ENCODE measurements at regions of chr1 and their contacts with region 1.

Region 1: DNA sequence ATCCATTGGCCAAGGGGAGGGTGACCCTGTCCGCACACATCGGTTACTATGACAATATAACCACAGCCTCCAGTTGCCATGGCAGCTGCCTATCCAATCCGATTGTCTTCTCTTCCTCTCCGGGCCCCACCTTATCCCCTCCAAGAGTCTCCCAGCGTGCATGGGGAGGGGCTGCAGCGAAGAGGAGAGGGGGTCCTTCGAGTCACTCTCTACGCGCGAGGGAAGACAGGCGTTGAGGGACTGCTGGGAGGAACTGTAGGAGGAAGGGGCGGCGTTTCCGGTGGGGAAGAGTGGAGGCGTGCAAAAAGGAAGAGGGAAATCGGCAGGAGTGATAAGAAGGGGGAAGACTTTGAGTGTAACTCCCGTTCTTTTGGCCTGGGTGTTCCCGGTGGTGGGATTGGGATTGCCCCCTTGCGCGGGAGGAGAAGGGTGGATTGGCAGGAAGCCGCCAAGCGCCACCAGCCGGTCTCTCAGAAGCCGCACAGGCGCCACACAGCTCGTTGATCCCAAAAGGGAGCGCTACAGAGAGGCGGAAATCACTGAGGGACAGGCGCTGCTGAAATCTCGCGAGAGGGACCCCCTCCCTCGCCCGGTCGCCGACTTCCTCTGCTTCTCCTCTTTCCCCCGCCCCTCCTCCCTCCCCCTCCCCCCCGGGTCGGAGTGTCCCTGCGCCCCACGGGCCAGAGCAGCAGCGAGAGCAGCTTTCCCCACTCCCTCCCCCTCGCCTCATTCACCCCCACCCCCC is 384 bp upstream of the SMG7 start:
- DNase-seq: peak; percentile 94 to 99 (median 97)
- ATAC-seq: peak; percentile 66
- H3K4me3 ChIP-seq: peak overlapping the region; percentile 78
- H3K4me3 Mint-ChIP-seq: peak overlapping the region; percentile 96
- H3K27ac ChIP-seq: peak overlapping the region; percentile 86 to 96
- H3K27ac Mint-ChIP-seq: peak overlapping the region; percentile 97
- H3K4me1 ChIP-seq: peaks cover 22% of the 10 kb centered on the region
- H3K4me1 Mint-ChIP-seq: peaks cover 37% of the 10 kb centered on the region
- H3K27me3 ChIP-seq: no peaks in the 10 kb centered on the region
- H3K27me3 Mint-ChIP-seq: no peaks in the 10 kb centered on the region
- CTCF ChIP-seq: no peak

Region 2: DNA sequence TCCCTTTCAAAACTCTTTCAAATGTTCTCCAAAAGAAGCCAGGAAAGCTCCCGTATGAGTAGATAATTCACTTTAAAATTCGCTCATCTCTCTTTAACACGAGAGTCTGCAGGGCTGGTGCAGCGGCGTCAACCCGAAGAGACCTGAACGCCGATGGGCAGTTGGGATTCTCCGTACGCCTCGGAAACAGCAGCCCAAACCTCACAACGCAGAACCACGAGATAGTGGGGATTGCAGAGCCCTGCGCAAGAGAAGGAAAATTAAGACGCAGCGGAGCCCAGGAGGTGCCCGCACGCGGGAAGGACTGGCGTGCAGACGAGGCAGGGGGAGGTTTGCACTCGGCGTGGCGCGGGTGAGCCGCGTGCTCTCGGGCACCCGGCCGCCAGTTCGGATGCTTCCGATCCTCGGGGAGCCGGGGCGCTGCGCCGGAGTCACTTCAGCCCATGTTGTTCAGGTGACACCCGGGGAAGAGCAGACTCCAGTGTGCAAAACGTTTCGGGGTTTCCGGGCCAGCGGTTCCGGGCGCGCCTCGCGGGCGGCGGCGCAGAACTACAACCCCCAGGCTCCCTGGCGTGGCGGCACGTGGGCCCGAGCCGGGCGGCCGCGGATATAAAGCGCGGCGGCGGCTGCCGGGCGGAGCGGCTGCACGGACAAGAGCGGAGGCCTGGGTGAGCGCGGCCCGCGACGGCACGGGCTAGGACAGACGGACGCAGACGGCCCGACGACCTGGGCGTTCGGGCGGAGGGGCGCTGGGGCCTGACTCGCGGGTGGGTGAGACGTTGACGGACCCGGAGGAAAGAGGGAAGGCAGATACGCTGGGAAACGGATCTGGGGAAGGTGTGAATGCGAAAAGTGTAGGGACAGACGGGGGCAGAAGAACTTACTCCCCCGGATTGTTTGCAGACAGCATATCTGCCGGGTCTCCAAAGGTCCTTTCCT is 682.5 kb before region 1 on chr1 and contains the start of gene NPL:
- CTCF ChIA-PET with region 1: no interaction called
- POLR2A ChIA-PET with region 1: no interaction called
- intact Hi-C with region 1: loop called in 1 of 2 experiments (anchors 5 kb)
- DNase-seq: peak; percentile 71 to 94 (median 82)
- ATAC-seq: peak; percentile 97
- H3K4me3 ChIP-seq: peak within 1 kb of the TSS; percentile 66
- H3K4me3 Mint-ChIP-seq: peak within 1 kb of the TSS; percentile 96
- H3K27ac ChIP-seq: peak within 1 kb of the TSS in 1 of 2 donors; percentile 51
- H3K27ac Mint-ChIP-seq: peak within 1 kb of the TSS; percentile 77
- H3K4me1 ChIP-seq: peaks cover 10% of the 10 kb centered on the region
- H3K4me1 Mint-ChIP-seq: peaks cover 7% of the 10 kb centered on the region
- H3K27me3 ChIP-seq: no peaks in the 10 kb centered on the region
- H3K27me3 Mint-ChIP-seq: no peaks in the 10 kb centered on the region
- CTCF ChIP-seq: no peak
- total RNA-seq, gene NPL: 0.63 to 1.7 TPM

Region 3: GRCh38 chr1:183505454-183506089 is 33.7 kb after region 1 on chr1:
- CTCF ChIA-PET with region 1: no interaction called
- POLR2A ChIA-PET with region 1: no interaction called
- intact Hi-C with region 1: loop called in 1 of 2 experiments (anchors 2 kb)
- DNase-seq: no peak
- ATAC-seq: no peak
- H3K4me3 ChIP-seq: no peak overlapping the region
- H3K4me3 Mint-ChIP-seq: no peak overlapping the region
- H3K27ac ChIP-seq: no peak overlapping the region
- H3K27ac Mint-ChIP-seq: no peak overlapping the region
- H3K4me1 ChIP-seq: no peaks in the 10 kb centered on the region
- H3K4me1 Mint-ChIP-seq: peaks cover 39% of the 10 kb centered on the region
- H3K27me3 ChIP-seq: no peaks in the 10 kb centered on the region
- H3K27me3 Mint-ChIP-seq: no peaks in the 10 kb centered on the region
- CTCF ChIP-seq: no peak

Region 4: DNA sequence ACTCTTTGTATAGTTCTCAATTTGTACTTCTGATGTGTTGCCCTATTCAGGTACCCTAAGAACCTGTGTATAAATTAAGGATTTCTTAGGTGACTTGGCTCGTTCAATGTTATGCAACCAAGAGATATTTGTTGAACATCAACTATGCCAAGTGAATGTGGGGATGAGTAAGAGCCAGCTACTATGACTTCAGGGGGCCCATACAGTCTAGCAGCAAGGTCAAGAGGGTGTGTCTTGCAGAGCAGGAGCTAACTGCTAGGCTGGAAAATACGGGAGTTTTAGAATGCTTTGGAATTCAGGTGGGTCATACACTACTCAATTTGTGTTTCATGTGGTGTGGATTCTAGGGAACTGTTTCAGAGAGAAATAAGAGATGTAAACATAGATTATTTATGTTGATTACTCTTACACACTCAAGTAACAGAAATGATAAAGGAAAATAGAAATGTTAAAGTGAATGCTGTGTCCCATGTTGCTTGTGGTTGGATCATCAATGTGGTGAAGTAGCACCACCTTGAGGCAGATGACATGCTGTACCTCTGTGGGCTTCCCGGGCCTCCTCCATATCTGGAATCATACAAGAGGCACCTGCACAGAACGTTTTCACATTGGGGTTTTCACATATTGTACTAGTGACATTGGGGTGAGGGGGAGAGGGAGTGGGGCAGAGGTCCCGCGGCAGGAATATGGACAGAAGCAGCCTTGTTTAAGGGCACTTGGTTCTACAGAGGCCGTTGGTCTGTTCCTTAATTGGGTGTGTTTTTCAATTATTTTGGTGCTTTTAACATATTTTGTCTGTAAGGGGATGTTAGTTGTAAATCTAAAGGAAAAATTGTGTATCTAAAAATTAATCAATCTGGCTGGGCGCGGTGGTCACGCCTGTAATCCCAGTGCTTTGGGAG is 151.2 kb after region 1 on chr1:
- CTCF ChIA-PET with region 1: no interaction called
- POLR2A ChIA-PET with region 1: no interaction called
- intact Hi-C with region 1: loop called in 1 of 2 experiments (anchors 1 kb)
- DNase-seq: peak; percentile 18 to 76 (median 36)
- ATAC-seq: peak; percentile 99
- H3K4me3 ChIP-seq: no peak overlapping the region
- H3K4me3 Mint-ChIP-seq: no peak overlapping the region
- H3K27ac ChIP-seq: no peak overlapping the region
- H3K27ac Mint-ChIP-seq: peak overlapping the region; percentile 60
- H3K4me1 ChIP-seq: no peaks in the 10 kb centered on the region
- H3K4me1 Mint-ChIP-seq: peaks cover 25% of the 10 kb centered on the region
- H3K27me3 ChIP-seq: no peaks in the 10 kb centered on the region
- H3K27me3 Mint-ChIP-seq: no peaks in the 10 kb centered on the region
- CTCF ChIP-seq: peak; percentile 64

Region 5: GRCh38 chr1:183685112-183685713 is 213.3 kb after region 1 on chr1:
- CTCF ChIA-PET with region 1: no interaction called
- POLR2A ChIA-PET with region 1: no interaction called
- intact Hi-C with region 1: loop called in 1 of 2 experiments (anchors 5 kb)
- DNase-seq: peak in 7 of 14 experiments; percentile 2 to 73 (median 30)
- ATAC-seq: peak; percentile 60
- H3K4me3 ChIP-seq: no peak overlapping the region
- H3K4me3 Mint-ChIP-seq: no peak overlapping the region
- H3K27ac ChIP-seq: no peak overlapping the region
- H3K27ac Mint-ChIP-seq: no peak overlapping the region
- H3K4me1 ChIP-seq: no peaks in the 10 kb centered on the region
- H3K4me1 Mint-ChIP-seq: no peaks in the 10 kb centered on the region
- H3K27me3 ChIP-seq: no peaks in the 10 kb centered on the region
- H3K27me3 Mint-ChIP-seq: no peaks in the 10 kb centered on the region
- CTCF ChIP-seq: peak; percentile 85

Region 6: DNA sequence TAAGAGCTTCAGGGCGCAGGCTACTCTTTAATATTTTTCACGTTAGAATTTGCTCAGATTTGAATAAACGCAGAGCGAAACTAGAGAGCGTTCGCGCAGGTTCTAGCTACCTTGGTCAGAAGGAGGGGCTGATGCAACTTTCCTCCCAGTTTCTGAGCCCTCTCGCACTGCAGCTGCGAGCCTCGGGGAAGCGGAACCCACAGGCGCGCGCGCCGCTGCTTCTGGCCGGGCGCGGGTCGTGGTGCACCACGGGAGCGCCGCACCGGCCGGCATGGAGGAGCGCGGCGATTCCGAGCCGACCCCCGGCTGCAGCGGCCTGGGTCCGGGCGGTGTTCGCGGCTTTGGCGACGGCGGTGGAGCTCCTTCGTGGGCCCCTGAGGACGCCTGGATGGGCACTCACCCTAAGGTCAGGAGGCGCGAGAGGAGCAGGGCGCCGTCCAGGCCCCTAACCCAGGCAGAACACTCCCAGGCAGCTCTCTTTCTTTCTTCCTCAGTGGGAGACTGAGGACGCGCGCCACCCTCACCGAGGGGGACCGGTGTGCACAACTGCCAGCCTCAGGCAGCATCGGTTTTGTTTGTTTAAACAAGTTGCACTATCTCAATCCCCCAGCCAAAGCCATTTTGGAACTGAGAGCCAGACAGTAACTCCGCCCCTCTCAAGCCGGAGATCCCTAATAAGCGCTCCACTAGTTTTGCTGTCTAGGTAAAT is 579.7 kb after region 1 on chr1 and contains the start of gene TSEN15:
- CTCF ChIA-PET with region 1: no interaction called
- POLR2A ChIA-PET with region 1: interaction called, 3 read pairs
- intact Hi-C with region 1: loop called (anchors 5 kb)
- DNase-seq: peak; percentile 50 to 87 (median 70)
- ATAC-seq: peak; percentile 96
- H3K4me3 ChIP-seq: peak within 1 kb of the TSS; percentile 87
- H3K4me3 Mint-ChIP-seq: peak within 1 kb of the TSS; percentile 98
- H3K27ac ChIP-seq: peak within 1 kb of the TSS; percentile 33 to 80
- H3K27ac Mint-ChIP-seq: peak within 1 kb of the TSS; percentile 92
- H3K4me1 ChIP-seq: peaks cover 15% of the 10 kb centered on the region
- H3K4me1 Mint-ChIP-seq: peaks cover 43% of the 10 kb centered on the region
- H3K27me3 ChIP-seq: no peaks in the 10 kb centered on the region
- H3K27me3 Mint-ChIP-seq: peaks cover 15% of the 10 kb centered on the region
- CTCF ChIP-seq: no peak
- total RNA-seq, gene TSEN15: 11.2 to 12.2 TPM